Activated CD4-positive, alpha-beta T cell treated with anti-CD3 and anti-CD28 coated beads, Interleukin-2, amount 10 ng/mL, durations not matched to agents 24 days and 14 days (primary cell): ENCODE measurements at regions of chr12 and their contacts with region 1.

Region 1: GRCh38 chr12:120317224-120318105 is 10.1 kb downstream of the PLA2G1B start:
- DNase-seq: peak; percentile 100
- H3K4me3 Mint-ChIP-seq: peak overlapping the region; percentile 93
- H3K27ac Mint-ChIP-seq: peak overlapping the region; percentile 95
- H3K4me1 Mint-ChIP-seq: peaks cover 12% of the 10 kb centered on the region
- H3K27me3 Mint-ChIP-seq: peaks cover 5% of the 10 kb centered on the region

Region 2: GRCh38 chr12:120301962-120302815 is 15.3 kb before region 1 on chr12 and contains the start of gene SIRT4:
- intact Hi-C with region 1: loop called (anchors 1 kb)
- DNase-seq: peak; percentile 96
- H3K4me3 Mint-ChIP-seq: peak within 1 kb of the TSS; percentile 89
- H3K27ac Mint-ChIP-seq: peak within 1 kb of the TSS; percentile 70
- H3K4me1 Mint-ChIP-seq: peaks cover 8% of the 10 kb centered on the region
- H3K27me3 Mint-ChIP-seq: peaks cover 3% of the 10 kb centered on the region
- total RNA-seq, gene SIRT4: 1.1 and 2.5 TPM in 2 replicates

Region 3: GRCh38 chr12:120649442-120650232 is 332.2 kb after region 1 on chr12:
- intact Hi-C with region 1: no loop called
- DNase-seq: no peak
- H3K4me3 Mint-ChIP-seq: peak overlapping the region; percentile 62
- H3K27ac Mint-ChIP-seq: no peak overlapping the region
- H3K4me1 Mint-ChIP-seq: peaks cover 12% of the 10 kb centered on the region
- H3K27me3 Mint-ChIP-seq: peaks cover 53% of the 10 kb centered on the region